PC-9 (cell line): ENCODE measurements at regions of chr16 and their contacts with region 1.

Region 1: GRCh38 chr16:28597692-28598261 is 927 bp upstream of the SULT1A2 start:
- DNase-seq: peak; percentile 68 to 70
- H3K4me3 ChIP-seq: peak overlapping the region; percentile 36; the same call in 1 of the 2 replicates
- H3K27ac ChIP-seq: peak overlapping the region; percentile 94
- H3K4me1 ChIP-seq: peaks cover 34% of the 10 kb centered on the region
- H3K27me3 ChIP-seq: no peaks in the 10 kb centered on the region
- CTCF ChIP-seq: peak; percentile 34; the same call in 1 of the 2 replicates

Region 2: DNA sequence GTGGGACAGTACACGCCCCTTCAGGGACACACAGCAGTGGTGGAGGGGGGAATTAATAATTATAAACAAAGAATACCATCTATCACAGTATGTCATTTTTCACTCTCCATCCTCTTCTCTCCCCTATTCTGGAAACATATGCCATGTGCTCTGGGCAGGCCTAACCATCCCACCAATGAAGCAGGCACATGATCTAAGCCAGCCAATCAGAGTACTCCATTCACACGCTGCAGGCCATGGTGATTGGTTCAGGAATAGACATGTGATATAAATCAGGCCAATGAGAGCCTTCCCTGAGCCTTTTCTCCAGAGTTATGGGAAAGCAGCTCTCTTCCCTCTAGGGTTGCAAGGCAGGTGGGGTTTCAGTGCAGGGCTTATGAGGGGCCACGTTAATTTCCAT is 570.7 kb before region 1 on chr16:
- CTCF ChIA-PET with region 1: no interaction called
- POLR2A ChIA-PET with region 1: no interaction called
- intact Hi-C with region 1: no loop called
- DNase-seq: no peak
- H3K4me3 ChIP-seq: no peak overlapping the region
- H3K27ac ChIP-seq: no peak overlapping the region
- H3K4me1 ChIP-seq: no peaks in the 10 kb centered on the region
- H3K27me3 ChIP-seq: peaks cover 87% of the 10 kb centered on the region
- CTCF ChIP-seq: no peak

Region 3: GRCh38 chr16:28291873-28292660 is 305.7 kb before region 1 on chr16 and contains the start of gene SBK1:
- CTCF ChIA-PET with region 1: no interaction called
- POLR2A ChIA-PET with region 1: interaction called, 18 read pairs
- intact Hi-C with region 1: no loop called
- DNase-seq: peak; percentile 64 to 94
- H3K4me3 ChIP-seq: peak within 1 kb of the TSS; percentile 62
- H3K27ac ChIP-seq: no peak within 1 kb of the TSS
- H3K4me1 ChIP-seq: 0 out of 2 replicates have a peak, but pooled peaks cover 6% of the 10 kb centered on the region
- H3K27me3 ChIP-seq: peaks cover 19% of the 10 kb centered on the region; the same call in 1 of the 2 replicates
- CTCF ChIP-seq: no peak
- total RNA-seq, gene SBK1: 18.4 and 22.1 TPM in 2 replicates

Region 4: GRCh38 chr16:28513484-28514181 is 84.1 kb before region 1 on chr16:
- CTCF ChIA-PET with region 1: no interaction called
- POLR2A ChIA-PET with region 1: no interaction called
- intact Hi-C with region 1: no loop called
- DNase-seq: peak in 1 of 2 experiments; percentile 35
- H3K4me3 ChIP-seq: no peak overlapping the region
- H3K27ac ChIP-seq: no peak overlapping the region
- H3K4me1 ChIP-seq: peaks cover 20% of the 10 kb centered on the region
- H3K27me3 ChIP-seq: no peaks in the 10 kb centered on the region
- CTCF ChIP-seq: no peak

Region 5: DNA sequence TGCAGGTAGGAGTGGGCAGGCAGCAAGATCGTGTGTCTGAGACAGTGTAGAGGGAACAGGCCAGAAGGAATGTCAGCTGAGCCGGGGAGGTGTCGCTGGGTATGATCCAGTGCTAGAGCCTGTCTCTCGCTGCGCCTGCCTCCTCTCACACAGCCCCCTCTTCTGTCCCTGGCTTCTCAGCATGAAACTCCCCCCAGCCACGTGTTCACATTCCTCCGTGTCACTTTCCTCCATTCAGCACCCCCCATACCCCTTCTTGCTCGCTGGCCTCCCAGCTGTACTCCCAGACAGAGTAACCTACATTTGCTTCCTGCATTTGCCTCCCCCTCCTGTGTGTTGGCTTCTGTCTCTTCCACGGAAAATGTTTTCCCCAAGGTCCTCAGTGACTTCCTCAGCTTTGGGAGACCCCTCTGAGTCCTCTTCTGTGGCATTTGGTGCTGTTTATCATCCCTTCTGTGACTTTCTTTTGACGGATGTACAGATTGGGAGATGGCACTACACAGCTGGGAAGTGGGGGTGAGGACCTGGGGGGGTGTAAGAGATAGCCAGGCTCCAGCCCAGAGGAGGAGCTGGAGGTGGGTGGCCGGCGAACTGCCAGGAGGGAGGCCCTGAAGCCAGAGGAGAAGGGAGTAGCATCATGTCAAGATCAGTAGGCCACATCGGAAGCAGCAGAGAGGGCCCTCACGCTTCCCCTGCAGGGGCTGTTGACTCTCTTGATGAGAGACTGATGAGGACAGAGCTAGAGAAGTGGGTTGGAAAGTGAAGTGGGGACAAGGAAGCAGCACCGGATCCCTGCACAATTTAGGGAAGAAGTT is 24.9 kb before region 1 on chr16:
- CTCF ChIA-PET with region 1: no interaction called
- POLR2A ChIA-PET with region 1: no interaction called
- intact Hi-C with region 1: no loop called
- DNase-seq: no peak
- H3K4me3 ChIP-seq: no peak overlapping the region
- H3K27ac ChIP-seq: no peak overlapping the region
- H3K4me1 ChIP-seq: no peaks in the 10 kb centered on the region
- H3K27me3 ChIP-seq: no peaks in the 10 kb centered on the region
- CTCF ChIP-seq: no peak